Common myeloid progenitor, CD34-positive (primary cell): ENCODE measurements at regions of chr4 and their contacts with region 1.

Region 1: DNA sequence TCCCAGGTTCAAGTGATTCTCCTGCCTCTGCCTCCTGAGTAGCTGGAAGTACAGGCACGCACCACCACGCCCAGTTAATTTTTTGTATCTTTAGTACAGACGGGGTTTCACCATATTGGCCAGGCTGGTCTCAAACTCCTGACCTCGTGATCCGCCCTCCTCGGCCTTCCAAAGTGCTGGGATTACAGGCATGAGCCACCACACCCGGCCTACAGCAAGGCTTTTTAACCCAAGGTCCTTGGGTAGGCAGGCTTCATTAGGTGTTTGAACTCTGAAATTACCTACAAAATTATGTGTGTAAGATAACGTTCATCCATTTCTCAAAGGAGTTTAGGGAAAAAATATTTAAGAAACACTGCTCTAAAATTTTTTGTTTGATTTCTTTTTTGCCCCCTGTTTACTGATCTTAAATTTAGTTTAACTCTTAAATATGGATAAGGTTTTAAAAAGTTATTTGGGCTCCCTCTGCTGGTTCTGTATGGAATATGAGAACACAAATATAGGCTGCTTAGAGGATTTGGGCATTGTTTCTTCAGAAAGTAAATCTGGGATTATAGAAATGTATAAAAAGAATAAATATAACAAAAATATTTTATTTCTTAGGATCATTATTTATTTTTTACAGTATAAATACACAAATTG is 92.8 kb downstream of the CBR4 start:
- DNase-seq: peak; percentile 63 to 79 (median 69)
- H3K4me3 ChIP-seq: no peak overlapping the region
- H3K27ac ChIP-seq: no peak overlapping the region
- H3K4me1 ChIP-seq: peaks cover 0 to under 1% (median 0%) of the 10 kb centered on the region in 4 experiments
- H3K27me3 ChIP-seq: no peaks in the 10 kb centered on the region

Region 2: GRCh38 chr4:168585168-168586091 is 331.8 kb before region 1 on chr4:
- CTCF ChIA-PET with region 1: interaction called, 35 read pairs
- POLR2A ChIA-PET with region 1: no interaction called
- DNase-seq: peak; percentile 43 to 63 (median 53)
- H3K4me3 ChIP-seq: no peak overlapping the region
- H3K27ac ChIP-seq: no peak overlapping the region
- H3K4me1 ChIP-seq: no peaks in the 10 kb centered on the region
- H3K27me3 ChIP-seq: no peaks in the 10 kb centered on the region

Region 3: DNA sequence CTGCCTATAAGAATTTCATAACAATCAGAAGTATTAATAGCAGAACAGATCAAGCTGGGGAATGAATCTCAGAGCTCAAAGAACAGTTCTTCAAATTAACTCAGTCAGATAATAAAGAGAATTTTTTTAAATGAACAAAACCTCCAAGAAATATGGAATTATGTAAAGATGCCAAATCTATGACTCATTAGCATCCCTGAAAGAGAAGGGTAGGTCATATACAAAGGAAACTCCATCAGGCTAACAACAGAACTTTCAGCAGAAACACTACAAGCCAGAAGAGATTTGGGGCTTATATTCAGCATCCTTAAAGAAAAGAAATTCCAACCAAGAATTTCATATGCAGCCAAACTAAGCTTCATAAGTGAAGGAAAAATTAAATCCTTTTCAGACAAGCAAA is 64.2 kb after region 1 on chr4:
- CTCF ChIA-PET with region 1: no interaction called
- POLR2A ChIA-PET with region 1: no interaction called
- DNase-seq: no peak
- H3K4me3 ChIP-seq: no peak overlapping the region
- H3K27ac ChIP-seq: no peak overlapping the region
- H3K4me1 ChIP-seq: no peaks in the 10 kb centered on the region
- H3K27me3 ChIP-seq: no peaks in the 10 kb centered on the region